ENCODE measurements at regions of chr15 and their contacts with region 1.

Region 1: DNA sequence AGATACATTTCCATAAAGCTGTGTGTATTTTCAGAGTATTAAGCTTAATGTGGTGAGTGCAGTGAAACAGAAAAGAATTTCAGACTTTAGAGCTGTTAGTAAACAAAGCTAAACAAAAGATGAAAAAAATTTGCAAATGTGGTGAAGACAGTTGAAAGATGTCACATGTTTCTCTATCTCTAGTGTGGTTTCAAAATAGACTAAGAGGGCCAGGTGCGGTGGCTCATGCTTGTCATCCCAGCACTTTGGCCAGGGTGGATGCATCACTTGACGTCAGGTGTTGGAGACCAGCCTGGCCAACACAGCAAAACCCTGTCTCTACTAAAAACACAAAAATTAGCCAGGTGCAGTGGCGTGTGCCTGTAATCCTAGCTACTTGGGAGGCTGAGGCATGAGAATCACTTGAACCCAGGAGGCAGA is 466.0 kb upstream of the NR2F2 start:
- DNase-seq: peak; percentile 40 to 54
- ATAC-seq: peak; percentile 66 to 79 (median 76)
- H3K4me3 ChIP-seq: no peak overlapping the region
- H3K4me3 Mint-ChIP-seq: peak overlapping the region; percentile 78
- H3K27ac ChIP-seq: peak overlapping the region; percentile 60
- H3K27ac Mint-ChIP-seq: peak overlapping the region; percentile 79 to 90
- H3K4me1 ChIP-seq: peaks cover 34% of the 10 kb centered on the region
- H3K4me1 Mint-ChIP-seq: peaks cover 66 to 67% of the 10 kb centered on the region in 2 donors
- H3K27me3 ChIP-seq: no peaks in the 10 kb centered on the region
- H3K27me3 Mint-ChIP-seq: no peaks in the 10 kb centered on the region
- CTCF ChIP-seq: no peak

Region 2: GRCh38 chr15:94163999-94164807 is 1700.3 kb before region 1 on chr15:
- intact Hi-C with region 1: loop called (anchors 10 kb)
- DNase-seq: peak; percentile 57 to 77
- ATAC-seq: peak; percentile 71 to 89 (median 76)
- H3K4me3 ChIP-seq: no peak overlapping the region
- H3K4me3 Mint-ChIP-seq: peak overlapping the region; percentile 4
- H3K27ac ChIP-seq: no peak overlapping the region
- H3K27ac Mint-ChIP-seq: no peak overlapping the region
- H3K4me1 ChIP-seq: no peaks in the 10 kb centered on the region
- H3K4me1 Mint-ChIP-seq: peaks cover 13 to 14% of the 10 kb centered on the region in 2 donors
- H3K27me3 ChIP-seq: no peaks in the 10 kb centered on the region
- H3K27me3 Mint-ChIP-seq: no peaks in the 10 kb centered on the region
- CTCF ChIP-seq: peak; percentile 99

Region 3: DNA sequence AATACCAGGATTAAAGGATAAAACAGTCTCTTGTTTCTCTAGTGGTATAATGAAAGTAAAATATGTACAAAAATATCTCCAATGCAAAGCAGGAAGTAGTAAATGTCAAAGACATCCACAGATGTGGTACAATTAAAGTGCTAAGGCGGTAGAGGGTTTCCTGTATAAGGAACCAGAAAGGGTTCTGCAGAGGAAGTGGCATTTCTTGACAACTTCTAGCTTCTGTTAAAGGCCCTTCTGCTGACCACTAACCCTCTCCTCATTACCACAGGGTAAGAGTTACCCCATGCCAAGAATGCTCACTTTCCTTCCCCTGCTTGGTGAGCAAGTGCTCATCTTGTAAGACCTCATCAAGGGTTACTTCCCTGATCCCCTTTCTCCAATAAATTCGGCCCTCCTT is 417.6 kb before region 1 on chr15:
- intact Hi-C with region 1: loop called (anchors 2 kb)
- DNase-seq: peak; percentile 26 to 67
- ATAC-seq: peak; percentile 91 to 99 (median 92)
- H3K4me3 ChIP-seq: no peak overlapping the region
- H3K4me3 Mint-ChIP-seq: peak overlapping the region; percentile 64
- H3K27ac ChIP-seq: no peak overlapping the region
- H3K27ac Mint-ChIP-seq: peak overlapping the region; percentile 45 to 57
- H3K4me1 ChIP-seq: peaks cover 22% of the 10 kb centered on the region
- H3K4me1 Mint-ChIP-seq: peaks cover 46 to 47% of the 10 kb centered on the region in 2 donors
- H3K27me3 ChIP-seq: no peaks in the 10 kb centered on the region
- H3K27me3 Mint-ChIP-seq: peaks cover 12 to 17% of the 10 kb centered on the region in 2 donors
- CTCF ChIP-seq: no peak

Region 4: DNA sequence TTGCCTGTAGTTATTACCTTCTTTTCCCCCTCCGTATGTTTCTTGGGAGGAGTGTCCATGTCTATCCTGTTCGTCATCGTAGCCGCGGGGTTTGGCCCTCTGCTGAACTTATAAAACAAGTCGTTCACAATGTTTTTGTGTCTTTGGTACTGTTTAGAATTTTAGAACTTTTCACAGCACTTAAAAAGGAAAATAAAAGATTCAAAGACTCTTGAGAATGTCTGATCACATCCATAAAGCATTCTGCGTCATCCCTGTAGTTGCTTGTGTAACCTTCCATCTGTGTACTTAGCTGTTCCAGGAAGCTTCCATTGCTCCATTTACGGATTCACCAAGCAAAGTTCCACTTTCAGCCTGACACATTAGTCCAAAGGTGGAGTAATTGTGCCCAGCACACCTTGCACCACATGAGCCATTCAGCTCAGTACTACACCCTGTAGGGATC is 211.1 kb before region 1 on chr15:
- intact Hi-C with region 1: no loop called
- DNase-seq: no peak
- ATAC-seq: no peak
- H3K4me3 ChIP-seq: no peak overlapping the region
- H3K4me3 Mint-ChIP-seq: no peak overlapping the region
- H3K27ac ChIP-seq: no peak overlapping the region
- H3K27ac Mint-ChIP-seq: no peak overlapping the region
- H3K4me1 ChIP-seq: no peaks in the 10 kb centered on the region
- H3K4me1 Mint-ChIP-seq: no peaks in the 10 kb centered on the region
- H3K27me3 ChIP-seq: no peaks in the 10 kb centered on the region
- H3K27me3 Mint-ChIP-seq: peaks cover 8 to 26% of the 10 kb centered on the region in 2 donors
- CTCF ChIP-seq: no peak

Region 5: GRCh38 chr15:95812491-95812890 is 52.0 kb before region 1 on chr15:
- intact Hi-C with region 1: no loop called
- DNase-seq: no peak
- ATAC-seq: no peak
- H3K4me3 ChIP-seq: no peak overlapping the region
- H3K4me3 Mint-ChIP-seq: no peak overlapping the region
- H3K27ac ChIP-seq: no peak overlapping the region
- H3K27ac Mint-ChIP-seq: no peak overlapping the region
- H3K4me1 ChIP-seq: no peaks in the 10 kb centered on the region
- H3K4me1 Mint-ChIP-seq: no peaks in the 10 kb centered on the region
- H3K27me3 ChIP-seq: no peaks in the 10 kb centered on the region
- H3K27me3 Mint-ChIP-seq: peaks cover 5 to 15% of the 10 kb centered on the region in 2 donors
- CTCF ChIP-seq: no peak

Region 6: DNA sequence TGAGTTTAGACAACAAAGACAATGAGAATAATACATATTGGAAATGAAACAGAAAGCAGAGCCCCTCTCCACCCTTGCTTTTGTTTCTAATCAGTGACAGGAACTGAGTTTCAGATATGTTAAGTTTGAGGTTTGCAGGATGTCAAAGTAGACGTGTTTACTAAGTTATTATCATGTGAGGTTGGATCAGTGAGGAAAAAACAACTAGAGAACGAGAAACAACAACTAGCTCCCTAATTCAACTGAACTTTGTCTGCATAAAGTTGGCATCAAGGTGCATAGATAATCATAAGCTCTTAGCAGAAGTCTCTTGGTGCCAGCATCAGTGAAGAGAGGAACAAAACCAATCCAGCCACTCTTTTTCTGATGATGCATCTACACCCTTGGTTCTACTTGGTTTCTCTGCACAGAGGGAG is 25.1 kb before region 1 on chr15:
- intact Hi-C with region 1: loop called (anchors 2 kb)
- DNase-seq: peak in 1 of 2 donors; percentile 50
- ATAC-seq: peak; percentile 91 to 98 (median 95)
- H3K4me3 ChIP-seq: no peak overlapping the region
- H3K4me3 Mint-ChIP-seq: peak overlapping the region; percentile 66
- H3K27ac ChIP-seq: peak overlapping the region; percentile 92
- H3K27ac Mint-ChIP-seq: peak overlapping the region; percentile 83 to 90
- H3K4me1 ChIP-seq: peaks cover 7% of the 10 kb centered on the region
- H3K4me1 Mint-ChIP-seq: peaks cover 35 to 39% of the 10 kb centered on the region in 2 donors
- H3K27me3 ChIP-seq: no peaks in the 10 kb centered on the region
- H3K27me3 Mint-ChIP-seq: no peaks in the 10 kb centered on the region
- CTCF ChIP-seq: no peak

Region 7: DNA sequence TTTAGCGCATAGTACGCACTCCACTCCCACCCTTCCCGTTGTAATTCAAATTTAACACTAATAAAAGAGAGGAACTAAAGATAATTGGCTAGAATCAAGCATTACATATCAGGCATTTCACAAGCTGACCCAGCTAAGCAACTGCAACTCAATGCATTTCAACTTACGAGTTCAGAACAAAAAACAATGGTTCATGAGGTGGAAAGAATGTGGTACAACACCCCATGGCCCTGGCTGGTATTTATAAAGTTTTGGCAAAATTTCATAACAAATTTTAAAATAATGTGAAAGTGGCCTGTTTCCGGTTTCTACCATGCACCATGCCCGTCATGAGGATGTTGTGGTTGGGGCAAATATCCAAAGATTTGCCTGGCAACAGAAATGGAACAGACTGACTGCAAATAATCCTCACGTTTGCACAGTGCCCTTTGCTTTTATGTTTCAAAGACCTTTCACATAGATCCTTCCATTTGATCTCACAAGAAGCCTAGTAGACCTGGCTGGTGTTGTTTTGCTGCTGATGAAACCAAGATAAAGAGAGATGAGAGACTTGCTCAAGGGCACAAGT is 10.7 kb after region 1 on chr15:
- intact Hi-C with region 1: loop called (anchors 2 kb)
- DNase-seq: peak in 1 of 2 donors; percentile 57
- ATAC-seq: peak; percentile 22 to 49 (median 24)
- H3K4me3 ChIP-seq: no peak overlapping the region
- H3K4me3 Mint-ChIP-seq: no peak overlapping the region
- H3K27ac ChIP-seq: peak overlapping the region; percentile 44
- H3K27ac Mint-ChIP-seq: peak overlapping the region; percentile 29 to 62
- H3K4me1 ChIP-seq: peaks cover 23% of the 10 kb centered on the region
- H3K4me1 Mint-ChIP-seq: peaks cover 56 to 72% of the 10 kb centered on the region in 2 donors
- H3K27me3 ChIP-seq: no peaks in the 10 kb centered on the region
- H3K27me3 Mint-ChIP-seq: no peaks in the 10 kb centered on the region
- CTCF ChIP-seq: no peak

Region 8: GRCh38 chr15:95990833-95991232 is 126.4 kb after region 1 on chr15:
- intact Hi-C with region 1: loop called (anchors 2 kb)
- DNase-seq: peak; percentile 4 to 46
- ATAC-seq: peak; percentile 49 to 85 (median 61)
- H3K4me3 ChIP-seq: no peak overlapping the region
- H3K4me3 Mint-ChIP-seq: peak overlapping the region; percentile 58
- H3K27ac ChIP-seq: no peak overlapping the region
- H3K27ac Mint-ChIP-seq: peak overlapping the region; percentile 39 to 80
- H3K4me1 ChIP-seq: peaks cover 25% of the 10 kb centered on the region
- H3K4me1 Mint-ChIP-seq: peaks cover 54 to 59% of the 10 kb centered on the region in 2 donors
- H3K27me3 ChIP-seq: peaks cover 29% of the 10 kb centered on the region
- H3K27me3 Mint-ChIP-seq: peaks cover 26 to 43% of the 10 kb centered on the region in 2 donors
- CTCF ChIP-seq: no peak